H1 (cell line): ENCODE measurements at regions of chr11 and their contacts with region 1.

Region 1: DNA sequence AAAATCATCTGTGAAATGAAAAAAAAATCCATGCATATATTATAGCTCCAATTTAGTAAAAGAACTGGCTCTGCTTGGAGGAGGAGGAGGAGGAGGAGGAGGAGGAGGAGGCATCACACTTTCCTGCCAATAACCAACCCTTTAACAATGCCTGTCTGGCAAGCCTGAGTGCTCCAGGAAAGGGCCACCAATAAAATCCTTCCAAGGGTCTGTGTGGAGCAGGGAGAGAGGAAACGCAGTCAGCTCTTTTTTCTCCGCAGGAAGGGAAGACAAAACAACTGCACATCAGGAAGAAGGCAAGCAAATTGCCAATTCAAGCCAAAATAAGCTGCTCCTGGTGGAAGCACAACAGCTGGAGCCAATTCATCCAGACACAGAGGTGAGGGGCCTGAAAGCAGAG is 139.0 kb downstream of the KCNC1 start:
- DNase-seq: no peak
- H3K4me3 ChIP-seq: no peak overlapping the region
- H3K27ac ChIP-seq: 0 out of 2 replicates have a peak overlapping the region, but pooled peaks have one; percentile 6
- H3K4me1 ChIP-seq: peaks cover 0 to 3% (median 3%) of the 10 kb centered on the region in 4 experiments; a peak in 1 of 7 replicates
- H3K27me3 ChIP-seq: no peaks in the 10 kb centered on the region
- CTCF ChIP-seq: no peak
- EP300 ChIP-seq: no peak
- POLR2A ChIP-seq: no peak
- RAD21 ChIP-seq: no peak

Region 2: DNA sequence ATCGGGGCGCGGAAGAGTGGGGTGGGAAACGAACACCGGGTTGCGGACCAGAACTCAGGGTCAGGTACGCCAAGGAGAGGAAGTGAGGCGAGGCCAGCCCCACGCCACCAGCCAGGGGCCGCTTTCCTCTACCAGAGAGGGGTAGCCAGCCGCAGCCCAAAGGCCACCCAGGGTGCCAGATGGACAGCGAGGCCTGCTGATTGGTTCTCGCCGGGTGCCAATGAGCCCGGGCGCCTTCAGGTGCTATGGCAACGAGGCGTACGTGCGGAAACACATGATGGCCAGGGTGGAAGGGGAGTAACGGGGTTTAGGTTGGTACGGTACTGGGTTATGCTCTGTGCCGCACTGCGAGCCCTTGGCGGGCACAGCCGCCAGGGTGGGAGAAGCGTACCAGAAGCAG is 10.4 kb after region 1 on chr11:
- CTCF ChIA-PET with region 1: interaction called, 21 read pairs
- POLR2A ChIA-PET with region 1: no interaction called
- DNase-seq: peak in 1 of 2 experiments; percentile 42
- H3K4me3 ChIP-seq: no peak overlapping the region
- H3K27ac ChIP-seq: no peak overlapping the region
- H3K4me1 ChIP-seq: peaks cover 2 to 12% (median 3%) of the 10 kb centered on the region in 4 experiments; a peak in 3 of 7 replicates
- H3K27me3 ChIP-seq: no peaks in the 10 kb centered on the region
- CTCF ChIP-seq: no peak
- EP300 ChIP-seq: no peak
- POLR2A ChIP-seq: no peak
- RAD21 ChIP-seq: no peak

Region 3: GRCh38 chr11:17915500-17916143 is 42.0 kb after region 1 on chr11:
- CTCF ChIA-PET with region 1: no interaction called
- POLR2A ChIA-PET with region 1: no interaction called
- DNase-seq: no peak
- H3K4me3 ChIP-seq: no peak overlapping the region
- H3K27ac ChIP-seq: no peak overlapping the region
- H3K4me1 ChIP-seq: peaks cover 5 to 15% (median 8%) of the 10 kb centered on the region in 4 experiments; a peak in 5 of 7 replicates
- H3K27me3 ChIP-seq: no peaks in the 10 kb centered on the region
- CTCF ChIP-seq: no peak
- EP300 ChIP-seq: no peak
- POLR2A ChIP-seq: no peak
- RAD21 ChIP-seq: no peak

Region 4: DNA sequence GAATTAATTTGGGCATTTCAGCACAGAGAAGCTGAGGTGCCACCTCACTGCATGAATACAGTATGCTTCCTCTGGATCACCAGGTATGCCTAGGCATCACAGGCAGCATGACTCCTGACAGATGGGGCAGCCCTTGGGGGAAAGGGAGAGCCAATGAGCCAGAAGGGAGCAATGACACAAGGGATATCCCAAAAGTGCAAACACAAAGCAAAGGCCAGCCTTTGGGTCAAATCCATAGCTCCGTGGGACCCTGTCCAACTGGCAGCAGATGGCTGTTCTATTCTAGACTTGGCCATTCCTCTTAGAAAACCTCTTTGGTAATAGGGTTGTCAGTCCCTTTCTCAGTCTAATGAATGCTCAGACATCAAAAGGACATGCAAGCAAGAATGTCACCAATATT is 66.0 kb after region 1 on chr11:
- CTCF ChIA-PET with region 1: no interaction called
- POLR2A ChIA-PET with region 1: no interaction called
- DNase-seq: no peak
- H3K4me3 ChIP-seq: no peak overlapping the region
- H3K27ac ChIP-seq: no peak overlapping the region
- H3K4me1 ChIP-seq: no peaks in the 10 kb centered on the region
- H3K27me3 ChIP-seq: no peaks in the 10 kb centered on the region
- CTCF ChIP-seq: no peak
- EP300 ChIP-seq: no peak
- POLR2A ChIP-seq: no peak
- RAD21 ChIP-seq: no peak